ENCODE measurements at regions of chr14 and their contacts with region 1.

Region 1: DNA sequence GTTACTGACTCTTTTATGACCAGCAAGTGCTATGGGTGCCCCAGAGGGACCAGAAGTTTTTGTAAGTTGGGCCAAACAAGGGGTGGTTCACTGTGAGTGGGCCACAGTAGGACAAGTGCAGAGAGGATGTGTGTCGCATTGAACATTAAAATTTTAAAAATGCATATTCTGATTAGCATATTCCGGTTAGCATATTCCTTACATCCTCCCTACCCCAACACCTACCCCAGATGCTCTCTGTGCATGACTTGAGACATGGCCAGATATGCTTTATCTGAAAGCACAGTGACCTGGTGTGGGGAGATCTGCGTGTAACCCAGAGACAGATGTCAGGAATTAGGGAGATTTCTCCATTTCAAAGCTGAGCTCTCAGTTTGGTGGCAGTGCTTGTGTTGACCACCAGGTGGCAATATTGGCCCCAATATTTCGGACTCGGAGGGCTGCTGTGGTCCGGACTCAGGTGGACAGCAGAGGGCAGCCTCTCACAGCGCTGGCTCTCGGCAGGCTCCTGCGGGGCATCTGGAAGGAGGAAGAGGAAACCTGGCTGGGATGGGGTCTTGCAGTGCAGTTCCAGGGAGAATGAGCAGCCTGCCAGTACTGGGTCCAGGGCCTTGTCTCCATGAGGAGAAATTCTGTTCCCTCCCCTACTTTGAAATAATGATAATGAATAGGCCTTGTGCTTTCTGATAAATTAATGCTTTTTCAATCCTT is 1.6 kb upstream of the CEBPE start:
- DNase-seq: peak; percentile 92
- H3K4me3 ChIP-seq: no peak overlapping the region; a peak in 1 of 4 replicates
- H3K27ac ChIP-seq: no peak overlapping the region
- H3K4me1 ChIP-seq: no peaks in the 10 kb centered on the region; a peak in 2 of 4 replicates
- H3K27me3 ChIP-seq: no peaks in the 10 kb centered on the region; the same call in 1 of the 2 replicates
- CTCF ChIP-seq: peak; percentile 100
- EP300 ChIP-seq: no peak
- RAD21 ChIP-seq: peak; percentile 96

Region 2: DNA sequence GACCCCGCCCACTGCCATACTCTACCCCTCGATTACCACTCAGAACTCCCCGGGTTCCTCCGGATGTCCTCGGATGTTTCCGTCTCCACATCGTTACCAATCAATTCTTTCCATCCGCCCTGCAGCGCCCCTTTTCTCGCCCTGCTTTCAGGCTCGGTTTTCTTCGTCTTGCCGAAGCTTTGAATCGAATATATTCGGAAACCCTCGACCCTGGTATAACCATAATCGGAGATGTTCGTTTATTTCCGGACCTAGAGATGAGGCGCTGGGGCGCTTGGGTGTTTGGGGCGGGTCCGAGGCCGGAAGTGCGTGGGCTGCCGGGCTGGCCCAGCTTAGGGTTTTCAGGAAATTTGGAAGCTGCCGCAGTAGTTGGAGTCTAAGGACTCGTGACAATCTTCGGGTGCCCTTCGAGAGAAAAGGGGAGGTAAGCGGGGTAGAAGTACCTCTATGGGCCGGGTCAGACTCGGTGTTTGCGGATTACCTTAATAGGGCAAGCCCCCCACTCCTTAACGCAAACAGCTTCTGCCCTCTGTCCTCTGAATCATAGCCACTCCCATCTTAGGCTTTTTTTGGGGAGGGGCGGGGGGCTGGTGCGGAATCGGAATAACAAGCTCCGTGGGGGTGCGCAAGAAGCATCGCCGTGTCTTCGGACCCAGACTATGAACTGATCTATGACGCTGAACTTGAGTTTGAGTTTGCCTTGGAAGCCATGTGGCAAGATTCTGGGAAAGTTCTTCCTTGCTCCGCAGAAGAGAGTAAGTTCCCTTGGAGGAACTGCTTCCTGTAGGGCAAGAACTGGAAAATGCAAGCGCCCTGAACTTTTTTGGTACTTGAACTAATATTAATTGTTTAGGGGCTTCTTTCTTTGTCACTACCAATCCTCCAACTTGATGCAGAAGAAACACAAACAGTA is 25.2 kb before region 1 on chr14 and contains the start of gene C14orf119:
- CTCF ChIA-PET with region 1: interaction called, 19 read pairs
- POLR2A ChIA-PET with region 1: no interaction called
- DNase-seq: peak; percentile 97
- H3K4me3 ChIP-seq: peak within 1 kb of the TSS; percentile 77 to 94
- H3K27ac ChIP-seq: peak within 1 kb of the TSS; percentile 93 to 96
- H3K4me1 ChIP-seq: peaks cover 7 to 20% of the 10 kb centered on the region in 2 experiments; a peak in 3 of 4 replicates
- H3K27me3 ChIP-seq: no peaks in the 10 kb centered on the region
- CTCF ChIP-seq: no peak
- EP300 ChIP-seq: no peak
- RAD21 ChIP-seq: no peak
- polyA plus RNA-seq, gene C14orf119: 55.2 and 73.3 TPM in 2 replicates

Region 3: DNA sequence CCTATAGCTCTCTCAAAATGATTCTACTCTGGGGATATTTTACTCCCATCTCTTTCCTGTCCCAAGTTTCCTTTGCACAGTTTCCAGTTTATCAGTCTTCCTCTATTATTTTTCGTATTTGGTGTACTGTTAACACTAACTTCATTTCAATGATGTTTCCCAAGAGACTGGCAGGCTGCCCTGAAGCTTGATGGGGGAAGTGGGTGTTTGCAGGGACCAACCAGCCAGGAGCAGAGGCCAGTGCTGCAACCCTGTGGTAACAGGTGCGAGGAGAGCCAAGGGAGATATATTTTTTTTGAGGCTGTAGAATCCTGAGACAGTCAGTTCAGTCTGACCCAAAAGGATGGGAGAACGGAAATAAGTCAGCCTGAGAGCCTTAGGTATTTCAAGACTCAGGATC is 10.2 kb after region 1 on chr14:
- CTCF ChIA-PET with region 1: interaction called, 26 read pairs
- POLR2A ChIA-PET with region 1: no interaction called
- DNase-seq: no peak
- H3K4me3 ChIP-seq: no peak overlapping the region
- H3K27ac ChIP-seq: no peak overlapping the region
- H3K4me1 ChIP-seq: no peaks in the 10 kb centered on the region
- H3K27me3 ChIP-seq: peaks cover 6% of the 10 kb centered on the region; the same call in 1 of the 2 replicates
- CTCF ChIP-seq: no peak
- EP300 ChIP-seq: no peak
- RAD21 ChIP-seq: no peak

Region 4: DNA sequence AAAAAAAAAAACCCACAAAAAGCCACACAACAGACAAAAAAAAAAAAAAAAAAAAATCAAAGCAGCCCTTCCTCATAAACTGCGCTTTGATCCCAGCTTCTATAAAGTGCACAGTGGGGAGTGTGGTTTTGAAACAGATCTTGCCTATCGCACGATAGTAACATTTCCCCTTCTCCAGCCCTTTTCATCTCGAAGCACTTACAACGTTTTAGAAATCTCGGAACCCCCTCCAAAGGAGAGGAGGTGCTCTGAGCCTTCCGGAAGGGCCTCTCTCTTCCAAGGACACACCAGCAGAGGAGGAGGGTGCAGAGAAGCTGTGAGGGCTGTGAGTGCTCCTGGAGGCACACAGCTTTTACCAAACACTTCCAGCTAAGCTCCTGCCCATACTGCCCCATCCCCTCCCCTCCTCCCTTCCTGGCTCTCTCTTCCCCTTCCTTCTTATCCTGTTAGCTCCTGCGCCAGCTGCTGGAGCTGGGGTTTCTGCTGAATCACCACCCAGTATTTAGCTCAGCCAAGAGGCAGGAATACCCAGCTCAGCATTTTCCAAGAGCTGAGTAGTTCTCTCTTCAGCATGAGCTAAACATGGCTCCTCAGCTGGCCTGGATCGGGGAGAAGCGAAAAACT is 34.4 kb after region 1 on chr14:
- CTCF ChIA-PET with region 1: interaction called, 10 read pairs
- POLR2A ChIA-PET with region 1: no interaction called
- DNase-seq: no peak
- H3K4me3 ChIP-seq: no peak overlapping the region
- H3K27ac ChIP-seq: no peak overlapping the region
- H3K4me1 ChIP-seq: peaks cover 0 to 32% of the 10 kb centered on the region in 2 experiments; a peak in 3 of 4 replicates
- H3K27me3 ChIP-seq: peaks cover 9% of the 10 kb centered on the region; the same call in 1 of the 2 replicates
- CTCF ChIP-seq: no peak
- EP300 ChIP-seq: no peak
- RAD21 ChIP-seq: no peak

Region 5: DNA sequence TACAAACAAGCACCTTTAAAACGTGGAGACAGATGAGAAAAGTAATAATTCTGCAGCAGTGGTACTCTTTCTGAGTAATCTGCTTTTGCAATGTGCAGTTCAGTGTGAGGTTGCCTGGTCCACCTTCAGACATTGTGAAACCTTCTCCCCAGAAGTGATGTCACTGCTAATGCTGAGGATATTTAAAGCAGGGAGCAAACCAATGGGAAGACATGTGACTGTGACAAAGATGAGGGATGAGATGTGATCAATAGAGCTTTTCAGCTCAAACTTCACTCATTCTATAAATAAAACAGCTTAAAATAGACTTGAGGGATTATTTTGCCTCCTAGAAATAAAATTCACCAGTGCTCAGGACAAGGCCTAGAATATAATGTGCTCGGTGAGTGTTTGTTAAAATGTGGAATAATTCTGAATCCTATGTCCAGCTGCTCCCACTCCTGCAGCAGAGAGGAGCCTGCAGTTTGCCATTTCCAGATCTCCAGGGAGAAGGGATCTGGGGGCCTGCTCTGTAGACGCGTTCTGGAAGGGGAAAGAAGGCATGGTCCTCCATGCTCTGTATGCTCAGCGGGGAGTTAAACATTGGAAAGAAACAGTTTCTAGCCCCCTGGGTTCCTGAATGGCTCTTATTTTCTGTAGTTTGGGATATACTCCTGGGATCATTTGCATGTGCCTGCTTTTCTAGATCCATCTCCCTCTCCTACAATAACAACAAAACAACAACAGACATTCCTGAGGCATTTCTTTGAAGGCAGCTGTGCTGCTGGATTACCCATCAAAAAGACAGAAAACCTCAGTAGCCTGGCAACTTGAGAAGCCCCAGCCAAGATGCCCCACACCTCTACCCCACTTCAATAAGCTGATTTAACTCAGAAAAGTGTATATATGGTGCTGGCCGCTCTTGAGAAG is 53.8 kb after region 1 on chr14:
- CTCF ChIA-PET with region 1: interaction called, 495 read pairs
- POLR2A ChIA-PET with region 1: no interaction called
- DNase-seq: no peak
- H3K4me3 ChIP-seq: no peak overlapping the region
- H3K27ac ChIP-seq: no peak overlapping the region
- H3K4me1 ChIP-seq: no peaks in the 10 kb centered on the region
- H3K27me3 ChIP-seq: peaks cover 12% of the 10 kb centered on the region; the same call in 1 of the 2 replicates
- CTCF ChIP-seq: no peak
- EP300 ChIP-seq: no peak
- RAD21 ChIP-seq: no peak

Region 6: GRCh38 chr14:23195550-23196101 is 74.9 kb after region 1 on chr14:
- CTCF ChIA-PET with region 1: interaction called, 495 read pairs
- POLR2A ChIA-PET with region 1: no interaction called
- DNase-seq: no peak
- H3K4me3 ChIP-seq: no peak overlapping the region
- H3K27ac ChIP-seq: no peak overlapping the region
- H3K4me1 ChIP-seq: no peaks in the 10 kb centered on the region
- H3K27me3 ChIP-seq: peaks cover 57% of the 10 kb centered on the region; the same call in 1 of the 2 replicates
- CTCF ChIP-seq: no peak
- EP300 ChIP-seq: no peak
- RAD21 ChIP-seq: no peak

Measured in SK-N-SH (cell line).